Ascending aorta (tissue), 2 donors: ENCODE measurements at regions of chr5 and their contacts with region 1.

Region 1: GRCh38 chr5:150656191-150657132 is 4.6 kb upstream of the MYOZ3 start:
- DNase-seq: no peak
- H3K4me3 ChIP-seq: peak overlapping the region; percentile 44 to 59
- H3K27ac ChIP-seq: peak overlapping the region; percentile 86 to 90
- H3K4me1 ChIP-seq: peaks cover 19 to 56% of the 10 kb centered on the region in 2 donors
- H3K27me3 ChIP-seq: no peaks in the 10 kb centered on the region
- CTCF ChIP-seq: peak; percentile 39 to 66 (median 58)

Region 2: DNA sequence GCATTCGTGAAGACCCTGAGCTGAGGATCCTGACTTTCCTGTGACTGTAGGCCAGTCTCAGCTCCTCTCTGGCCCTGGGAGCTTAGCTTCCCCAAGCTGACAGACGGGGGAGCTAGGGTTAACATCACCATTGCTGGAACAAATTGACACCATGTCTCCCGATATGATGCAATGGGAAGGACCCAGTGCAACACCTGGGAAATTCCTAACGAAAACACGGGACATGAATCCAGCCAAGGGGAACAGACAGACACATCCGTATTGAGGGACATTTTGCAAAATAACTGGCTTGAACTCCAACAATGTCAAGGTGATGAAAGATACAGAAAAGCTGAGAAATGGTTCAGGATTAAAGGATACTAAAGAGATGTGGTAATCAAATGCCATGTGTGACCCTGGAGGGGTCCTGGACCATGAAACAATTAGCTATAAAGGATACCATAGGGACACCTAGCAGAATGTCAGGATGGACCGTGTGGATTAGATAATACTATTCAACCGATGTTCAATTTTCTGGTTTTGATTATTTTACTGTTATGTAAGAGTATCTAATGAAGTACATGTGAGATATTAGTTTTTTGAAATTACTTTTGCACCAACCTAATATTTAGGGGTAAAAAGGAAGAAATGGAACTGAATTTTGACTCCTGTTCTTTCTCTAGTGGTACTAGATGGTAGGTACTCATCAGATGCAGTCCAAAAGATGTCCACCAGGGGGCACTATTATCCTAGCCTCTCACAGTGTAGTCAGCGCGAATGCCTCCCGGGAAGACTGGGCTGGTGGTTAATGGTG is 95.9 kb before region 1 on chr5:
- intact Hi-C with region 1: loop called (anchors 1 kb)
- DNase-seq: peak; percentile 35 to 95
- H3K4me3 ChIP-seq: no peak overlapping the region
- H3K27ac ChIP-seq: no peak overlapping the region
- H3K4me1 ChIP-seq: peaks cover 0 to 6% of the 10 kb centered on the region in 2 donors
- H3K27me3 ChIP-seq: no peaks in the 10 kb centered on the region
- CTCF ChIP-seq: peak; percentile 89